ENCODE measurements at regions of chr2 and their contacts with region 1.

Region 1: GRCh38 chr2:70942396-70943204 is 6.9 kb downstream of the ATP6V1B1 start:
- DNase-seq: peak in 1 of 2 donors; percentile 12
- H3K4me3 ChIP-seq: no peak overlapping the region
- H3K27ac ChIP-seq: no peak overlapping the region
- H3K4me1 ChIP-seq: no peaks in the 10 kb centered on the region
- H3K27me3 ChIP-seq: no peaks in the 10 kb centered on the region
- CTCF ChIP-seq: no peak
- POLR2A ChIP-seq: no peak

Region 2: GRCh38 chr2:69306822-69307578 is 1635.6 kb before region 1 on chr2:
- intact Hi-C with region 1: no loop called
- DNase-seq: peak; percentile 74 to 76
- H3K4me3 ChIP-seq: peak overlapping the region; percentile 59 to 83 (median 66)
- H3K27ac ChIP-seq: peak overlapping the region; percentile 88 to 91
- H3K4me1 ChIP-seq: peaks cover 4 to 26% of the 10 kb centered on the region in 2 donors
- H3K27me3 ChIP-seq: no peaks in the 10 kb centered on the region
- CTCF ChIP-seq: peak in 2 of 3 donors; percentile 76 to 83
- POLR2A ChIP-seq: no peak

Region 3: DNA sequence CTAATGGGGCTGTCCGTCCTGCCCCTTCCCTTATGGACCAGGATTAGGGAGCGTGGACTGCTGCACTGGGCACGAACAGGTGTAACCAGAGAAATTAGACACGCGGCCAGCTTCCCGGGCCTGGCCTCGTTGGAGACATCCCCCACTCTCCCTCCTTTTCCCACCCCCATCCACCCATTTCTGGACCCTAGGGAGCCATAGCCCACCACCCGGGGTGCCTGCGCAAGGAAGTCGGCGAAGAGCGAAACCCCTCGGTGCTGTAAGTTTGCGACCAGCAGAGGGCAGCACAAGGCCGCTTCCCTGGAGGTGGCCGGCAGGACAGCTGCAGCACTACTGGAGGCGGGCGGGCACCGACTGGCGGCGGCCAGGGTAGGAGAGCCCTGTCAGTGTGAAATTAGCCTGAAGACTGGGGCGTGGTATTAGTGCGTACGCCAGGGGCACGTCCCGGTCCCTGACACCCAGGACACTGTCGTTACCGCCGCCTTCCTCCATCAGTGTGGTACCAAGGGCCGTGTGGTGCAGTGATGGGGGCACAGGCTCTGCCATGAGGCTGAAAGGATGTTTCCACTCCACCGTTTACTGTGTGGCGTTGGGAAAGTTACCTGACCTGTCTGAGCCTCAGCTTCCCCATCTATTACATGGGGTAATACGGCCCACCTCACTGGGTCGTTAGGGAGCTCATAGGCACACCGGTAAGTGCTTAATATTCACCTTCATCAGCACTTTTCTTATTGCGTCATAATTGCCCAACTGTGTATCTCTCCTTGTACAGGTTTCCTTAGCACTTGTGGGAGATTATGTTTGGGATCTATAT is 71.0 kb before region 1 on chr2:
- intact Hi-C with region 1: loop called (anchors 5 kb)
- DNase-seq: peak; percentile 67 to 86
- H3K4me3 ChIP-seq: peak overlapping the region in 2 of 3 donors; percentile 11 to 47
- H3K27ac ChIP-seq: no peak overlapping the region
- H3K4me1 ChIP-seq: no peaks in the 10 kb centered on the region
- H3K27me3 ChIP-seq: peaks cover 0 to 13% of the 10 kb centered on the region in 2 donors
- CTCF ChIP-seq: peak; percentile 68 to 87 (median 87)
- POLR2A ChIP-seq: no peak

Region 4: DNA sequence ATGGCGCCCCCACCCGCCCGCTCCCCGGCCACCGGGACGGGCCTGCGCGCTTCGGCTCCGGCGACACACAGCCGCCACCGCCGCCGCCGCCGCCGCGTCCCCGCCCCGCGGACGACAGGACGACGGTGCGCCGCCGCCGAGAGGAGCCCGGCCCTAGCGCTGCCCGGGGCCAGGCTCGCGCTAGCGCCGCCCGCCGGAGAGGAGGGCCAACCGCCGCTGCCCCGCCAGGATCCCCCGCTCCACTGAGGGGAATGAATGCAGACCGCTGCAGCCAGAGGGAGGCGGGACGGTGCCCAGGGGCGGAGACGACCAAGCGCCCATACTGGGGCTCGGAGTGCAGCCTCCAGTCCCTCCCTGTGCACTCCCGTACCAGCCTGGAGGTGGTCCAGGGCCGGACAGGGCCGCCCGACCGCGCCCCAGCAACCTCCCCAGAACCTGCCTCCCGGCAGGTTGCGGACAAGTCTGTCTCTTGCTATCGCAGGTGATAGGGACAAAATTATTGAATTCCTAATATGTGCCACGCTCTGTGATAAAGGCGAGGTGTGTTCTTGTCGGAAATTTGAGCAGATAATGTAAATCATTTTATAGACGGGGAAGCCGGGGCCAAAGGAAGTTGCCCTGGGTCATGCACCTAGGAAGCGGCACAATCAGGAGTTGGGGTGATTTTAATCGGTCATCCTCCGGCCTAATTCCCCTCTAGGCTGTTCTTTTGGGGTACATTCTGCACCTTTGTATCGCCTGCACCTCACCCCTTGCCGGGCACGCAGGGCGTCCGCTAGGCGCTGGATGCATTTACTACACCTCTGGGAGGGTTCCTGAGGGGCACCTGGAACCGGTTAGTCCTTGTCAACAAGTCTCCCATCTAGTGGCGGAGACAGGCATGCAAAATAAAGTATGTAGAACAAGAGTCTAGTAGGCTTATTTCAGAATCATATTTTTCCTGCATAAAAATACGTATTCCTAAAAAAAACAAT is 52.4 kb after region 1 on chr2 and contains the start of gene TEX261:
- intact Hi-C with region 1: no loop called
- DNase-seq: peak; percentile 76 to 84
- H3K4me3 ChIP-seq: peak within 1 kb of the TSS; percentile 84 to 100 (median 85)
- H3K27ac ChIP-seq: peak within 1 kb of the TSS; percentile 88 to 89
- H3K4me1 ChIP-seq: peaks cover 2 to 9% of the 10 kb centered on the region in 2 donors
- H3K27me3 ChIP-seq: no peaks in the 10 kb centered on the region
- CTCF ChIP-seq: peak in 2 of 3 donors; percentile 27 to 53
- POLR2A ChIP-seq: no peak
- total RNA-seq, gene TEX261: 39.5 to 48.8 (median 40.0) TPM

Region 5: GRCh38 chr2:72081451-72081850 is 1138.9 kb after region 1 on chr2:
- intact Hi-C with region 1: no loop called
- DNase-seq: no peak
- H3K4me3 ChIP-seq: no peak overlapping the region
- H3K27ac ChIP-seq: no peak overlapping the region
- H3K4me1 ChIP-seq: no peaks in the 10 kb centered on the region
- H3K27me3 ChIP-seq: no peaks in the 10 kb centered on the region
- CTCF ChIP-seq: no peak
- POLR2A ChIP-seq: no peak

Measured in breast epithelium (tissue), 4 donors.